Mucosa of descending colon (tissue), 3 donors: ENCODE measurements at regions of chr4 and their contacts with region 1.

Region 1: DNA sequence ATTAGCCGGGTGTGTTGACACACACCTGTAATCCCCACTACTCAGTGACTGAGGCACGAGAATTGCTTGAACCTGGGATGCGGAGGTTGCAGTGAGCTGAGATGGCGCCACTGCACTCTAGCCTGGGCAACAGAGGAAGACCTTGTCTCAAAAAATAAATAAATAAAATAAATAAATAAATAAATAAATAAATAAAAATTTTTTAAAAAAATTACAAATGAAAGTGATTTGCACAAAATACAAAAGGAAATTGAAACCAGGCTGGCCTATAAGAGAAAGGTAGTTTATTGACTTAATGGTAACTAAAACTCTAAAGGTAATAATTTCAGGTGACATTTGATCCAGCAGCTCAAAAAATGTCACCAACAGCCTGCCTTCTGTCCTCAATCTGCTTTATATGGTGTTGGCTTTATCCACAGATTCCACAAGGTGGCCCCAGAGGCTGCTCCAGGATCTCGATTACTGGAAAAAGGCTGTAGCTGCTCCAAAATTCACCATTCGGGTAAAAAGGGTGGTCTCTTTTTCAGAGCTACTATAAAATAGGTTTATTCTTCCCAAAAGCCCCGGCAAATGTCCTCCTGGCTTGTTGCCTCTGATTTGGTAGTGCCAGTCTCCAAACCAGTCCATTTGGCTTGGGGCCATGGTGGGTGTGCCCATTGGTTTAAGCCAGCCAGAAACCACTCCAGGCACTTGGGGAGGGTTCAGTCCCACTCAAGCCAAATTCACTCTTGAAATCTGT is 61.4 kb upstream of the TRIM2 start:
- DNase-seq: peak; percentile 75 to 94 (median 86)
- ATAC-seq: peak; percentile 86
- H3K4me3 ChIP-seq: no peak overlapping the region
- H3K4me1 ChIP-seq: no peaks in the 10 kb centered on the region
- CTCF ChIP-seq: peak; percentile 39

Region 2: DNA sequence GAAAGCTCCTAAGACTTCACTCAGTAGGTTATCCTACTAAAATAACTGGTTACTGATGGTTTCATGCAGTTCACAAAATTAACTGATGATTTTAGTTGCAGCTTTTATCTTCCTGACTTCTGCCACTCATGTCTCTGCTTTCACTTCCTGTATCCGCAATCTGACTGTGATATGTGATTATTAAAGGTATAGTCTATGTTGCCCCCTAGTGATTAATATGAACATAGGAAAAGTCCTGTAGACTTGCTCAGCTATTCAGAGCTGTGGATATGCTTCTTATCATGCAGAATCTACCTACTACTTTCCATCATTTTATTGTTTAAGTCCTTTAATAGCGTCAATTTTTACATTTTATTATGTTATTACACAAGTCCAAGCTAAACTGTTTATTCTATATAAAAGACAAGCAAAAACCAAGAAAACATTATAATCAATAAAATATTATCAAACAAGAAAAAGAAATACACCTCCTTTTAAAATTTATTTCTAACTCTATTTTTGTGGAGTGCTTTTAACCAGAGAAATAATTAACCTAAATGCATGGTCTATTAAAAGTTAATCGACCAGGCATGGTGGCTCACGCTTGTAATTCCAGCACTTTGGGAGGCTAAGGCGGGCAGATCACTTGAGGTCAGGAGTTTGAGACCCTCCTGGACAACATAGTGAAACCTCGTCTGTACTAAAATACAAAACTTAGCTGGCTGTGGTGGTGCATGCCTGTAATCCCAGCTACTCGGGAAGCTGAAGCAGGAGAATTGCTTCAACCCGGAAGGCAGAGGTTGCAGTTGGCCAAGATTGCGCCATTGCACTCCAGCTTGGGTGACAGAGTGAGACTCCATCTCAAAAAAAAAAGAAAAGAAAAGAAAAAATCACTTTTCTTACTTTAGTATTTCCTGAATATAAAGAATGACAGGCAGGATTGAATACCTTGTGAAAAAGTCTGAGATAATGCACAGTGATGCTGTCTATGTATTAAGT is 500.8 kb after region 1 on chr4:
- intact Hi-C with region 1: loop called in 1 of 2 experiments (anchors 10 kb)
- DNase-seq: no peak
- ATAC-seq: peak; percentile 85
- H3K4me3 ChIP-seq: no peak overlapping the region
- H3K4me1 ChIP-seq: no peaks in the 10 kb centered on the region
- CTCF ChIP-seq: no peak